HCT116 (cell line): ENCODE measurements at regions of chr17 and their contacts with region 1.

Region 1: GRCh38 chr17:51734462-51734861 is 424.1 kb downstream of the CA10 start:
- DNase-seq: peak; percentile 12
- ATAC-seq: peak; percentile 80
- H3K4me3 ChIP-seq: no peak overlapping the region
- H3K27ac ChIP-seq: no peak overlapping the region
- H3K4me1 ChIP-seq: no peaks in the 10 kb centered on the region
- H3K27me3 ChIP-seq: 0 out of 2 replicates have a peak, but pooled peaks cover 10% of the 10 kb centered on the region
- CTCF ChIP-seq: peak; percentile 48 to 80 (median 78); a peak in 5 of 6 replicates
- POLR2A ChIP-seq: no peak
- RAD21 ChIP-seq: peak; percentile 49

Region 2: GRCh38 chr17:51153210-51154072 is 581.0 kb before region 1 on chr17 and contains the start of gene NME1:
- CTCF ChIA-PET with region 1: no interaction called
- POLR2A ChIA-PET with region 1: no interaction called
- RAD21 ChIA-PET with region 1: no interaction called
- intact Hi-C with region 1: no loop called
- DNase-seq: peak; percentile 100
- ATAC-seq: peak; percentile 92
- H3K4me3 ChIP-seq: peak within 1 kb of the TSS; percentile 74 to 82
- H3K27ac ChIP-seq: peak within 1 kb of the TSS; percentile 69
- H3K4me1 ChIP-seq: peaks cover 14 to 22% of the 10 kb centered on the region in 2 experiments
- H3K27me3 ChIP-seq: no peaks in the 10 kb centered on the region
- CTCF ChIP-seq: peak; percentile 97 to 100 (median 98)
- POLR2A ChIP-seq: peak; percentile 78
- RAD21 ChIP-seq: peak; percentile 100
- total RNA-seq, gene NME1: 510 TPM

Region 3: DNA sequence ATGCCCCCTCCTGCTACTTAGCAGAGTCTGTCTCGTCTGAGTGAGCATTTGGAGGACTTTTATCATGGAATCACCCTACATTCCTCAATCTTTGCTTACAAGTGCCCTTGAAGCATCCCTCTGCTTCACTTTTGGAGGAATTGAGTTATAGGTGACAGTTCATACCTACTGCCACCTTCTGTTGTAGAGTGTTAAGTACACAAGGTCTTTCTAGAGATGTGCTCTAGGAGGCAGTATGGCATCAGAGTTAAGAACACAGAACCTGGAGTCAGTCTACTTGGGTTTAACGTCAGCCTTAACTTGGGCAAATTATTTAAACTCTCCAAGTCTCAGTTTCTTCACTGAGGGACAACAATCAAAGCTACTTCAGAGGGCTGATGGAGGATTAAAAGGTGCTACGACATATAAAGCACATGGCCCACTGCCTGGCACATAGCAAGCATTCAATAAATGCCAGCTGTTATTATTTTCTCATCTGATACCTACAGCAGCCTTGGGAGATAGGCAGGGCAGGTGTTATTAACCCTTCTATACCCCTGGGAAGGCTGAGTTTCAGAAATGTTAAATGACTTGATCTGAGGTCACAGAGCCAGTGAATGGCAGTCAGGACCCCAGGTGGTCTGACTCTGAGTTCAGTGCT is 412.0 kb before region 1 on chr17:
- CTCF ChIA-PET with region 1: no interaction called
- POLR2A ChIA-PET with region 1: no interaction called
- RAD21 ChIA-PET with region 1: no interaction called
- intact Hi-C with region 1: loop called (anchors 5 kb)
- DNase-seq: peak; percentile 61
- ATAC-seq: peak; percentile 100
- H3K4me3 ChIP-seq: no peak overlapping the region
- H3K27ac ChIP-seq: no peak overlapping the region
- H3K4me1 ChIP-seq: no peaks in the 10 kb centered on the region
- H3K27me3 ChIP-seq: no peaks in the 10 kb centered on the region
- CTCF ChIP-seq: peak; percentile 94 to 99 (median 99)
- POLR2A ChIP-seq: no peak
- RAD21 ChIP-seq: peak; percentile 94